ENCODE measurements at regions of chr3 and their contacts with region 1.

Region 1: GRCh38 chr3:50550079-50550741 is 17.3 kb downstream of the C3orf18 start:
- DNase-seq: no peak
- ATAC-seq: peak; percentile 32 to 68 (median 60)
- H3K4me3 ChIP-seq: no peak overlapping the region
- H3K27ac ChIP-seq: no peak overlapping the region
- H3K4me1 ChIP-seq: no peaks in the 10 kb centered on the region
- H3K27me3 ChIP-seq: no peaks in the 10 kb centered on the region
- CTCF ChIP-seq: peak; percentile 54 to 80 (median 70)
- POLR2A ChIP-seq: no peak

Region 2: GRCh38 chr3:50347194-50347918 is 202.9 kb before region 1 on chr3:
- intact Hi-C with region 1: loop called (anchors 10 kb)
- DNase-seq: peak in 2 of 3 donors; percentile 72 to 75
- ATAC-seq: peak; percentile 7 to 29 (median 26)
- H3K4me3 ChIP-seq: no peak overlapping the region
- H3K27ac ChIP-seq: no peak overlapping the region
- H3K4me1 ChIP-seq: peaks cover 0 to 31% (median 7%) of the 10 kb centered on the region in 4 donors
- H3K27me3 ChIP-seq: no peaks in the 10 kb centered on the region
- CTCF ChIP-seq: peak; percentile 43 to 65 (median 56)
- POLR2A ChIP-seq: no peak